Activated CD4-positive, alpha-beta memory T cell treated with anti-CD3 and anti-CD28 coated beads, Interleukin-2, amount 10 ng/mL, durations not matched to agents 7 days and 5 days (primary cell): ENCODE measurements at regions of chr12 and their contacts with region 1.

Region 1: DNA sequence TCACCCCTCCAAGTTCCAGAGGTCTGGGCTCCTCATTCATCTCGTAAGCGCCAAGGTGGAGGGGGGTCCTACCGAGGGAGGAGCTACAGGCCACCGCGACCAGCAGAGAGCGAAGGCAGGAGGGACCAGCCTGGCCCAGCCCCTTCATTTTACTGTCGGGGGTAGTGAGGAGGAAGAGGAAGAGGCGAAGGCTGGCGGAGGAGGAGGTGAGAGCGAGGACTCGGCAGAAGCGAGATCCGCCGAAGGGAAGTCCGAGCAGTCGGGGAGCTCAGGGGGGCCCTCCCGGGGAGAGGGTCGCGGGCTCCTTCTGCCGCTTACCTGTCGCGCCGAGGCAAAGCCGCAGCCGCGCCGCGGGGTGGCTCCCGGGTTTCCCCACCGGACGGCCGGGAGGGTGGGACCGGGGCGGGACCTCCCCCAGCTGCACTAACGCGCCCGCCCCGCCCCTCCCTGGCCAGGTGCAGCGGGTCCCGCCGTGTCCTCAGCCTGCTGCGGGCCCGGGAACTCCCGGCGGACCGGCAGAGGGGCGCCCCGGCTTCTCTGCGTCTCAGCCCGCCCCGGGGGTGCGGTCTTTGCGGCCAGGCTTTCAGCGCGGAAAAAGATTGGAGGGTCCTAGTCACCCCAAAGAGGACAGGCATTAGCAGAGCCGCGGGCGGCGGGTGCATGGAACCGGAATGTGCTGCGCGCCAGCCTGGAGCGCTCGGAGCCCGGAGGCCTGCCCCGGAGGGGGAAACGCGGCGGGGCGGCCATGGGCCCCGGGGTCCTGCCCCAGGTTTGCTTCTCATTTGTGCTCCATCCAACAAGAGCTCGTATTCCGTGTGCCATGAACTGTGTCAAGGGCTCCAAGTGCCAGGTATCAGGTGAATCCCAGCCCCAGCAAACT is at the start of gene GALNT6:
- DNase-seq: peak; percentile 69
- H3K4me3 Mint-ChIP-seq: peak within 1 kb of the TSS; percentile 89
- H3K27ac Mint-ChIP-seq: peak within 1 kb of the TSS; percentile 55
- H3K4me1 Mint-ChIP-seq: peaks cover 79% of the 10 kb centered on the region
- H3K27me3 Mint-ChIP-seq: no peaks in the 10 kb centered on the region
- total RNA-seq, gene GALNT6: 17.8 to 18.6 TPM

Region 2: DNA sequence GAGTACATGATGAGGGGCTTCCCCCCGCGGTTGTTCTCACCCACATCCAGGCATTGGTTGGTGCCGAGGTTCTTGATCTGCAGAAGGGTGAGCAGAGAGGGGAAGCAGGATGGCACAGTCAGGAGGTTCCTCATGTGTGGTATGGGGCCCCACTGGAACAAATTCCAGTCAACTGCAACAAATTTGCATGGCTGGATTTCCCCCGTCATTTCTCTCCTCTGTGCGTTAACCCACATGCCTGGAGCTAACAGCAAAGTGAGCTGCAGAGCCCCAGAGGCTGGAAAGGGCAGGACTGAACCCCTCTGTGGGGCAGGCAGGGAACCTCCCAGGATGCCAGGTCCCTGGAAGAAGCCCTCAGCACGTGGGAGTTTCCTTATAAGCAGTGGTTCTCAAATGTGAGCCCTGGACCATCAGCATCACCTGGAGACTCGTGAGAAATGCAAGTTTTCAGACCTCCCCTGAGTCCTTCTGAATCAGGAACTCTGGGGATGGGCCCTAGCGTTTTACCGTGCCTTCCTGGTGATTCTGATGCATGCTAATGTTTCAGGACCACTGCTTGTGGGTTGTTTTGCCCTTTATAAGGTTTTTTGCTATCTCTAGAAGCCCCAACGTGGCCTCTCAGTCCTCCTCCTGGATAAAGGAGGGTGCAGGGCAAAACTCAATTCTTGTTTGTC is 34.0 kb before region 1 on chr12:
- CTCF ChIA-PET with region 1: no interaction called
- POLR2A ChIA-PET with region 1: no interaction called
- DNase-seq: no peak
- H3K4me3 Mint-ChIP-seq: no peak overlapping the region
- H3K27ac Mint-ChIP-seq: no peak overlapping the region
- H3K4me1 Mint-ChIP-seq: peaks cover 5% of the 10 kb centered on the region
- H3K27me3 Mint-ChIP-seq: no peaks in the 10 kb centered on the region

Region 3: DNA sequence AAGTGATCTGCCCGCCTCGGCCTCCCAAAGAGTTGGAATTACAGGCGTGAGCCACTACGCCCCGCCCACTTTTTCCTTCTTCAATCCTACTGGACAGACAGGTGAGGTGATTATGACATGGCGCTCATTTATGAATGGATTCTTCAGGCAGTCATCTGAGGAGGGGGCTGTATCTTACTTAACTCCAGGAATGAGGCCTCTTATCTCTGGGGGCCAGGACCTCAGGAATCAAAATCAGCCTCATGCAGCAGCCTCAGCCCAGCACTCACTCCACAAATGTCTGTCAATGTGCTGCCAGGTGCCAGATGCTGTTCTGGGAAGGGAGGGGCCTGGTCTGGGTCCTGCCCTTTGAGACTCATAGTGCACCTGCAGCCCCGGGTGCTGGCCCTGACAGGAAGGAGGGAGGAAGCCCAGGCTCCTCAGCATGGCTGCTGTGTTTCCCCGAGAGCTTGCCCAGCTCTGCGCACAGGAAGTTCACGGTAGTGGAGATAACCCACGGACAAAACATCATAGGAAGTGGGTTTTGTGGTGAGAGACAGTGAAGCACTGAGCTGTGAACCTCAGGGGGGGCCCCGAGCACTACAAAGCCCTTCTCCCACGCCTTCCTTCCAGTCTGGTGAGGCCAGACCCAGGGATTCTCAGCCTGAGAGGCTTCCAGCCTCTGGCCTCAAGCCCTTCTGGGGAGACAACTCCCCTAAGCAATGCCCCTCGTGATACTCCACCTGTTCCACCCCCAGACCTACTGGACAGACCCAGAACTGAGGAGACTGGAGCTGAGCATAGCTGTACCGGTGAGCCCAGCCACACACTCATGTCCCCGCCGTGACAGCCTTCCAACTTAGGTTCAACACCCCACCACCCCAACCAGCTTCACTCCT is 22.6 kb before region 1 on chr12:
- CTCF ChIA-PET with region 1: interaction called, 4 read pairs
- POLR2A ChIA-PET with region 1: interaction called, 34 read pairs
- DNase-seq: peak; percentile 93
- H3K4me3 Mint-ChIP-seq: peak overlapping the region; percentile 25
- H3K27ac Mint-ChIP-seq: peak overlapping the region; percentile 74
- H3K4me1 Mint-ChIP-seq: peaks cover 57% of the 10 kb centered on the region
- H3K27me3 Mint-ChIP-seq: no peaks in the 10 kb centered on the region

Region 4: GRCh38 chr12:51424662-51425438 is 33.3 kb after region 1 on chr12 and contains the start of gene SLC4A8:
- CTCF ChIA-PET with region 1: interaction called, 14 read pairs
- POLR2A ChIA-PET with region 1: no interaction called
- DNase-seq: peak; percentile 84
- H3K4me3 Mint-ChIP-seq: peak within 1 kb of the TSS; percentile 71
- H3K27ac Mint-ChIP-seq: no peak within 1 kb of the TSS
- H3K4me1 Mint-ChIP-seq: peaks cover 15% of the 10 kb centered on the region
- H3K27me3 Mint-ChIP-seq: peaks cover 3% of the 10 kb centered on the region
- total RNA-seq, gene SLC4A8: 5.2 to 5.4 TPM